OCI-LY7 (cell line): ENCODE measurements at regions of chr13 and their contacts with region 1.

Region 1: DNA sequence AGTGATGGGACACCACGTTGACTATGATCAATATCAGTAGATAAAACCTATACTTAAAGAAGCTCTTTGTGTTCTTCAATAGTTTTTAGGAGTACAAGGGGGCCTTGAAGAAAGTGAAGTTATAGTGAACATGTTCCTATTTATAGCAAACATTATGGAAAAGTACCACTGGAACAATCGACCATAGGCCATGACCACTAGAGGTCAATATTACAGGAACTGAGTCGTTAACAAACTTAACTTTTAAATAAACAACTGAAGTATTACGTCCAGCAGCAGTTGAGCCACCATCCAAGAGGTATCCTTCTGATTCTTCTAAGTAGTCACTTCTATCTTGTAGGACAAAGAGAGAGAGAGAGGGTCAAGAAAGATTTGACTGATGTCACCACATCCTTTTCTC is 391.0 kb upstream of the SLITRK5 start:
- DNase-seq: no peak
- H3K4me3 ChIP-seq: no peak overlapping the region
- H3K27ac ChIP-seq: no peak overlapping the region
- H3K4me1 ChIP-seq: peaks cover 15% of the 10 kb centered on the region
- CTCF ChIP-seq: peak; percentile 64

Region 2: GRCh38 chr13:87295636-87296035 is 15.5 kb after region 1 on chr13:
- CTCF ChIA-PET with region 1: no interaction called
- POLR2A ChIA-PET with region 1: interaction called, 10 read pairs
- intact Hi-C with region 1: no loop called
- DNase-seq: no peak
- H3K4me3 ChIP-seq: no peak overlapping the region
- H3K27ac ChIP-seq: no peak overlapping the region
- H3K4me1 ChIP-seq: no peaks in the 10 kb centered on the region
- CTCF ChIP-seq: no peak